ENCODE measurements at regions of chr7 and their contacts with region 1.

Region 1: GRCh38 chr7:134646425-134647305 is at the start of gene BPGM:
- DNase-seq: peak; percentile 99 to 100 (median 100)
- ATAC-seq: peak; percentile 99
- H3K4me3 ChIP-seq: peak within 1 kb of the TSS; percentile 62
- H3K27ac ChIP-seq: peak within 1 kb of the TSS; percentile 58
- H3K4me1 ChIP-seq: peaks cover 0 to 4% of the 10 kb centered on the region in 2 experiments; a peak in 2 of 5 replicates
- H3K27me3 ChIP-seq: no peaks in the 10 kb centered on the region
- CTCF ChIP-seq: peak; percentile 63 to 71 (median 66)
- EP300 ChIP-seq: no peak; the same call in none of the 2 replicates
- POLR2A ChIP-seq: peak; percentile 97
- RAD21 ChIP-seq: no peak
- polyA plus RNA-seq, gene BPGM: 33.0 to 46.1 TPM

Region 2: GRCh38 chr7:133551466-133551865 is 1095.2 kb before region 1 on chr7:
- CTCF ChIA-PET with region 1: no interaction called
- POLR2A ChIA-PET with region 1: no interaction called
- in situ Hi-C with region 1: no loop called
- intact Hi-C with region 1: no loop called
- DNase-seq: no peak
- ATAC-seq: no peak
- H3K4me3 ChIP-seq: no peak overlapping the region
- H3K27ac ChIP-seq: no peak overlapping the region
- H3K4me1 ChIP-seq: no peaks in the 10 kb centered on the region
- H3K27me3 ChIP-seq: no peaks in the 10 kb centered on the region
- CTCF ChIP-seq: no peak
- EP300 ChIP-seq: no peak
- POLR2A ChIP-seq: no peak
- RAD21 ChIP-seq: no peak

Region 3: DNA sequence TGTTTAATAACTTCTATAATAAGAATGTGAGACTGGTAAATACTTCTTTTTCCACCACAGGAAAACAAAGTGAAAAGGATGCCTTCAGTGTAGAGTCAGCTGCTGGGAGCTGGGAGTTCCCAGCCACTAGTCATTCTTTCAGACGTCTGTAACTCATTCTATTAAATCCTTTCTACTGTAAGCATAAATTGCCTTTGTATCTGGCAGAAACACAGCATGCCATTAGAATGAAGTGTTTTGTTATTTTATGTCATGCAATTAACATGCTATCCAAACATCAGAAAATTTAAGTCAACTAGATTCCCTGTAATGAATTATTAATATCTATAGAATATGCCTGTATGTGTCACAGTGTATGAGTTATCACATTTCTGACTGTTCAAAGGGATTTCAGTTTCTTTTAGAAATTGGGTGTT is 14.3 kb after region 1 on chr7:
- CTCF ChIA-PET with region 1: no interaction called
- POLR2A ChIA-PET with region 1: interaction called, 57 read pairs
- in situ Hi-C with region 1: no loop called
- intact Hi-C with region 1: no loop called
- DNase-seq: no peak
- ATAC-seq: no peak
- H3K4me3 ChIP-seq: no peak overlapping the region
- H3K27ac ChIP-seq: no peak overlapping the region
- H3K4me1 ChIP-seq: peaks cover 3 to 28% of the 10 kb centered on the region in 2 experiments; a peak in 3 of 5 replicates
- H3K27me3 ChIP-seq: no peaks in the 10 kb centered on the region
- CTCF ChIP-seq: no peak
- EP300 ChIP-seq: no peak
- POLR2A ChIP-seq: no peak
- RAD21 ChIP-seq: no peak

Measured in K562 (cell line).